Heart left ventricle (tissue), 16 donors: ENCODE measurements at regions of chr1 and their contacts with region 1.

Region 1: DNA sequence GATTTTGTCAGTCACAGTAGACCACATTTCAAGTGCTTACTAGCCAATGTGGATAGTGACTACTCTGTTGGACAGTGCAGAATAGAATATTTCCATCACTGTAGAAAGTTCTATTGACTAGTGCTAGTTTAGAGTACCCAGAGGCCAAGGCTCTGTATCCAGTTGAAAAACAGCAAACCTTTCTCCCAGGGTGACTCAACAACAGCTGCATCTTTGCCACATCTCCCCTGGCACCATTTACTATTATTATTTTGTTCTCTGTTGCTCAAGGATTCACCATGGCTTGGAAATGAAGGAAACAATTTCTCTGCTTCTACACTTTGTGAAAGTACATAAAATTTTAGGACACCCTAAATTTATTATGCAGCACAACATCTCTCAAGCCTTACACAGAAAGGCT is 85.3 kb upstream of the WDR26 start:
- DNase-seq: no peak
- ATAC-seq: no peak
- H3K4me3 ChIP-seq: no peak overlapping the region
- H3K27ac ChIP-seq: no peak overlapping the region
- H3K4me1 ChIP-seq: no peaks in the 10 kb centered on the region
- H3K27me3 ChIP-seq: no peaks in the 10 kb centered on the region
- CTCF ChIP-seq: no peak
- POLR2A ChIP-seq: no peak

Region 2: GRCh38 chr1:224922404-224923164 is 402.7 kb after region 1 on chr1:
- intact Hi-C with region 1: loop called in 3 of 10 experiments (anchors 2 to 5 kb)
- DNase-seq: no peak
- ATAC-seq: peak in 3 of 4 donors; percentile 55 to 76 (median 65)
- H3K4me3 ChIP-seq: no peak overlapping the region
- H3K27ac ChIP-seq: no peak overlapping the region
- H3K4me1 ChIP-seq: no peaks in the 10 kb centered on the region
- H3K27me3 ChIP-seq: no peaks in the 10 kb centered on the region
- CTCF ChIP-seq: peak; percentile 53 to 77 (median 62)
- POLR2A ChIP-seq: no peak